CD4-positive, alpha-beta T cell (primary cell): ENCODE measurements at regions of chr19 and their contacts with region 1.

Region 1: DNA sequence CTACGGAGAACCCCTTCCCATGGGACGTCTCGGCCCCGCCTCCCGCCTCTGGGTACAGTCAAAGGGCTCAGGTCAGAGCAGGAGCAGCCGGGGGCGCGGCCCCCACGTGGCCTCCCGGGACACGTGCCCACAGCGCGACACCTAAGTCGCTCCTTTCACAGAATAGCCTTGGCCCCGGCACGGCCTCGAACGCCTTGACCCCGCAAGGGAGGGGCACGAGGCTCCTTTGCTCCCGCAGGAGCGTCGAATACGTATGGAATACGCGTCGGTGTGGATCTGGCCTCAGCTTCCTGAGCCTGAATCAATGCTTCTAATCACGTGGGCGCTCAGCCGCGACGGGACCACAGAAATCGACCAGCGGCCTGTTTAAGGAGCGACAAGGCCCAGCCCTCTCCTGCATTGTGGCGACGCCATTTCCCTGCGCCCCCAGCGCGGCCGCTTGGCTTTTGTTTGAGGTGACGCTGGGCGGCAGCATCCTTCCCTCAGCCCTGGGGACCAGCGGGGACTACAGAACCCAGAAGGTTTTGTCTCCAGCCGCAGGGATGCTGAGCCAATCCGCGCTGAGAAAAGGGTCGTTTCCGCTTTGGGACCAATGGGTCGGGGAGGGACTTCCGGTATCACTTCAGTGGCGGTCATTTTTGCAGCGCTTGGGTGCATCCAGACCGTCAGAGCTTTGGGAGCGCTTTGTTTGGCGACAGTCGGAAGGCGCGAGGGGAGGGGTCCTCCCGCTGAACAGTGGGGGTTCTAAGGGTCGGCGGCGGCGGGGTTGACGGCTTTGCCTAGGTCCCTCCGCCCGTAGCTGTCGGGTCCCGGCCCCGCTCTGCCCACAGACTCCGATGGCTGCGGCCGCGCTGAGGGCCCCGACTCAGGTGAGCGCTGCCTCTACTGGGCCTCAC is at the start of gene ZIK1:
- DNase-seq: peak; percentile 76 to 96 (median 84)
- ATAC-seq: peak; percentile 87
- H3K4me3 ChIP-seq: peak within 1 kb of the TSS; percentile 83
- H3K4me3 Mint-ChIP-seq: peak within 1 kb of the TSS; percentile 92
- H3K27ac ChIP-seq: peak within 1 kb of the TSS; percentile 26 to 38
- H3K27ac Mint-ChIP-seq: peak within 1 kb of the TSS; percentile 61
- H3K4me1 ChIP-seq: peaks cover 29% of the 10 kb centered on the region
- H3K4me1 Mint-ChIP-seq: peaks cover 23% of the 10 kb centered on the region
- H3K27me3 ChIP-seq: no peaks in the 10 kb centered on the region
- H3K27me3 Mint-ChIP-seq: no peaks in the 10 kb centered on the region
- CTCF ChIP-seq: no peak
- total RNA-seq, gene ZIK1: 6.9 to 7.1 TPM

Region 2: GRCh38 chr19:57599761-57600383 is 16.1 kb after region 1 on chr19 and contains the start of gene ZNF530:
- CTCF ChIA-PET with region 1: interaction called, 3 read pairs
- POLR2A ChIA-PET with region 1: interaction called, 5 read pairs
- intact Hi-C with region 1: loop called in 1 of 2 experiments (anchors 1 kb)
- DNase-seq: peak; percentile 67 to 92 (median 83)
- ATAC-seq: peak; percentile 91
- H3K4me3 ChIP-seq: peak within 1 kb of the TSS; percentile 77
- H3K4me3 Mint-ChIP-seq: peak within 1 kb of the TSS; percentile 91
- H3K27ac ChIP-seq: peak within 1 kb of the TSS in 1 of 2 donors; percentile 29
- H3K27ac Mint-ChIP-seq: peak within 1 kb of the TSS; percentile 52
- H3K4me1 ChIP-seq: peaks cover 15% of the 10 kb centered on the region
- H3K4me1 Mint-ChIP-seq: peaks cover 27% of the 10 kb centered on the region
- H3K27me3 ChIP-seq: no peaks in the 10 kb centered on the region
- H3K27me3 Mint-ChIP-seq: no peaks in the 10 kb centered on the region
- CTCF ChIP-seq: no peak
- total RNA-seq, gene ZNF530: 2.7 to 3.4 TPM